ENCODE measurements at regions of chr11 and their contacts with region 1.

Region 1: DNA sequence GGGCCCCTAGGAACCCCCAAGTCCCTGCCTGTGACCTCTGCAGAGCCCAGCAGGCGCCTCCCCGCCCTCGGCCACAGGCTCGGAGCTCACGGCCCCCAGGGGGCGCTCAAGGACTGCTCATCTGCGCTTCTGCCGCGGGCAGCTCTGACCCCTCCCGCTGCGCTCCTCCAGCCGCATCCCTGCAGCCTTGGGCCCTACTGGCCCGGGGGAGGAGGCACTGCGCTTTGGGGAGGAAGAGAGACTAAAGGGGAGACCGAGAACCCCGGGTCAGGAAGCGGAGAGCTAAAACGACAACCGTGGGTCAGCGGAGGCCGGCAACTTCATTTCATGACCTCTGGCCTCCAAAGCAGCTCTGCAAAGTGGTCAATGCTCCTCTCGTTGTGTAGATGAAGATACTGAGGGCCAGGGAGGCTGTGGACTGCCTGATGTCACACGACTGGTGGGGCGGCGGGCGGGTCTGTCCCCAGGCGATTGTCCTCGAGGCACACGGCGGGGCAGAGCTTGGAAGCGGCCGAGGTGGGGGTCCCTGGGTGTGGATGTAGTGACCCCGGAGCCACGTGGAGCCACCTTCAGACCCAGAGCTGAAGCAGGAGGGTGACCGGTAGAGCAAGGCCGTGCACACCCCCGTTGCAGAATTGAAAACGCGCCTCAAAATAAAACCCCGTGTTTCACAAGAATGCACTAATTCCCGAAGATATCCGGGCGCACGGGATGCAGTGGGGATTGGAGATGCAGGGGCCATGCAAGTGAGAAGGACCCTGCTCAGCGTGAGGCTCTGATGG is 2.7 kb upstream of the KRTAP5-6 start:
- DNase-seq: peak; percentile 57
- ATAC-seq: peak; percentile 90
- H3K4me3 ChIP-seq: peak overlapping the region; percentile 69 to 70
- H3K27ac ChIP-seq: peak overlapping the region; percentile 63; the same call in 1 of the 2 replicates
- H3K4me1 ChIP-seq: peaks cover 0 to 12% of the 10 kb centered on the region in 2 experiments; a peak in 2 of 4 replicates
- H3K27me3 ChIP-seq: no peaks in the 10 kb centered on the region
- CTCF ChIP-seq: peak; percentile 83 to 97 (median 87)
- POLR2A ChIP-seq: no peak
- RAD21 ChIP-seq: peak; percentile 100

Region 2: DNA sequence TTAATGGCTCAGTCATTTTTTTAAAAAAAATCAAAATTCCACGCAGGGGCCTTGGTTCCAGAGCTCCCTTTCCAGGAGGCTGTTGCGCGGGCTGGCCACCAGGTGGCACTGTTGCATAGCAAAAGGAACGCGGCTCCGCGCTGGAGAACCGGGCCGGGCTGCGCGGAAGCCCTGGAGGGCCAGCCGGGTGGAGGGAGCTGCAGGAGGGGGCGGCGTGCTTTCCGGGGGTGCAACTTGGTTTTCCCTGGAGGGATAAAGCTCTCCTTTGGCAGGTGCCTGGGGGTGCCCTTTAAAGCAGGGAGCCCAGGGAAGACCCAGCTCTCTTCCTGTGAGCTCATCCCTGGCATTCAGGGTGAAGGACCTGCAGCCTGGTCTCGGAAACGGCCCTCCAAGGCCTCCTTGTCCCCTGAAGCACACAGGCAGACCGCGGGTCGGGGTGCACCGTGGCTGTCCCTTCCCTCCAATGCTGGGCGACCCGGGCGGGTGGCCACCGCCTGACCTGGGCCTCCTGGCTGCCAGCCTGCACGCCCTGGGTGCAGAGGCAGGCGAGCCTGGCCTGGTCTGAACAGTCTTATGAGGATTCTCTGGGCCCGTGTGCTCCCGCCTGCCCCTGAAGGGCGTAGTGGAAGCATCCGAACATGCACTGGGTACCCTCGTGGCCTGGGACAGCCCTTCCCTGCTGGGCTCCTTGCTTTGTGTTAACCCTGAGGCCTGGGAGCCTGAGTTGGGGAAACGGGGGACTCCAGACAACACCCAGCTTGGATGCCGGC is 41.3 kb before region 1 on chr11:
- CTCF ChIA-PET with region 1: interaction called, 35 read pairs
- POLR2A ChIA-PET with region 1: no interaction called
- RAD21 ChIA-PET with region 1: interaction called, 7 to 10 read pairs
- intact Hi-C with region 1: loop called (anchors 1 kb)
- DNase-seq: no peak
- ATAC-seq: peak; percentile 95
- H3K4me3 ChIP-seq: no peak overlapping the region
- H3K27ac ChIP-seq: no peak overlapping the region
- H3K4me1 ChIP-seq: peaks cover 0 to 7% of the 10 kb centered on the region in 2 experiments; a peak in 3 of 4 replicates
- H3K27me3 ChIP-seq: no peaks in the 10 kb centered on the region
- CTCF ChIP-seq: peak; percentile 92 to 95 (median 93)
- POLR2A ChIP-seq: no peak
- RAD21 ChIP-seq: peak; percentile 97

Region 3: GRCh38 chr11:1827095-1827813 is 133.0 kb after region 1 on chr11:
- CTCF ChIA-PET with region 1: interaction called, 259 read pairs
- POLR2A ChIA-PET with region 1: interaction called, 26 read pairs
- RAD21 ChIA-PET with region 1: interaction called, 35 to 63 read pairs
- intact Hi-C with region 1: loop called (anchors 1 kb)
- DNase-seq: no peak
- ATAC-seq: peak; percentile 65
- H3K4me3 ChIP-seq: 0 out of 4 replicates have a peak overlapping the region, but pooled peaks of 1 of the 2 experiments have one; percentile 16
- H3K27ac ChIP-seq: peak overlapping the region; percentile 34; the same call in 1 of the 2 replicates
- H3K4me1 ChIP-seq: peaks cover 42 to 69% of the 10 kb centered on the region in 2 experiments
- H3K27me3 ChIP-seq: no peaks in the 10 kb centered on the region
- CTCF ChIP-seq: no peak
- POLR2A ChIP-seq: no peak
- RAD21 ChIP-seq: no peak

Region 4: GRCh38 chr11:1876361-1877063 is 182.3 kb after region 1 on chr11:
- CTCF ChIA-PET with region 1: interaction called, 16 read pairs
- POLR2A ChIA-PET with region 1: no interaction called
- RAD21 ChIA-PET with region 1: no interaction called
- intact Hi-C with region 1: no loop called
- DNase-seq: no peak
- ATAC-seq: peak; percentile 94
- H3K4me3 ChIP-seq: no peak overlapping the region
- H3K27ac ChIP-seq: no peak overlapping the region; the same call in 1 of the 2 replicates
- H3K4me1 ChIP-seq: peaks cover 0 to 4% of the 10 kb centered on the region in 2 experiments; a peak in 1 of 4 replicates
- H3K27me3 ChIP-seq: no peaks in the 10 kb centered on the region
- CTCF ChIP-seq: peak; percentile 67 to 95 (median 79); a peak in 5 of 6 replicates
- POLR2A ChIP-seq: no peak
- RAD21 ChIP-seq: no peak; the same call in 1 of the 2 replicates

Region 5: GRCh38 chr11:2002042-2002776 is 308.0 kb after region 1 on chr11:
- CTCF ChIA-PET with region 1: interaction called, 16 read pairs
- POLR2A ChIA-PET with region 1: no interaction called
- RAD21 ChIA-PET with region 1: interaction called in 1 of 2 experiments, 4 read pairs
- intact Hi-C with region 1: no loop called
- DNase-seq: no peak
- ATAC-seq: no peak
- H3K4me3 ChIP-seq: no peak overlapping the region
- H3K27ac ChIP-seq: no peak overlapping the region
- H3K4me1 ChIP-seq: no peaks in the 10 kb centered on the region
- H3K27me3 ChIP-seq: no peaks in the 10 kb centered on the region
- CTCF ChIP-seq: no peak
- POLR2A ChIP-seq: no peak
- RAD21 ChIP-seq: no peak